Prostate gland (tissue), 2 donors: ENCODE measurements at regions of chr1 and their contacts with region 1.

Region 1: DNA sequence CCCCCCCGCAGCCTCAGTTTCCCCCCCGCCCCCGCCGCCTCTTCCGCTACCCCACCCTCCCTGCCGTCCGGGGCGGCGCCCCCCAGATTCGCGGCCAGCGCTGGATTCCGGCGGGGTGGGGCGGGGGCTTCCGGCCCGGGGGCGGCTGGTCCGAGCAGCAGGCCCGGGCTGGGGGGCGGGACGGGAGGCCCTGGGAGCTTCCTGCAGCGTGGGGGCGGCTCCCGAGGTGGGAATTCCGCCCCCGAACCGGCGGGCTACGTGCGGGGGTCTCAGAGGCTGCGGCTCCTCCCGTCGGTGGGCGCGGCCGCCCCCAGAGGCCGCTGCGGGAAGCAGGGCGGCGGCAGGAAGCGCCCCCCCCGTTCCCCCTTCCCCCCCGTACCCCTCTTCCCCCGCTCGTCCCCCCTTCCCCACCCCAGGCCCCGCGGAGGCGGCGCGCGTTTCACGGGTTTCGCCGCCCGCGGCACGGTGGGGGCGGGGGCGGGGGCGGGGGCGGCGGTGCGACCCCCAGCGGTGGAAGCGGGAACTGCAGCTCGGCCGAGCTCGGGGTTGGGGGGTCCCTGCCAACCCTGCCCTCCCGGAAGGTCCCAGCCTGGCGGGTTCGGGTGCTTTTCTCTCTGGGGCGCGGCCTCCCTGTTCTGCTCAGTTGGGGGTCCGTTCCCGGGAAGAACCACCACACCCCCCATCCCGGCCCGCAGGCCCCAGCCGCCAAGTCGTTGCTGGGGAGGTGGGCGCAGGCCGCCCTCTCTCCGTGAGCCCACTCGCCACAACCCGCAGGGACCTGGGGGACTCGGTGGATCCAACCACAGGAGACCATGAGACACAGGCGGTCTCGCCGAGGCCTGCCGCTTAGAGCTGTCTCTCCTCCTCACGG is 76.3 kb downstream of the MORN1 start:
- DNase-seq: no peak
- H3K4me3 ChIP-seq: peak overlapping the region; percentile 56 to 68
- H3K27ac ChIP-seq: peak overlapping the region; percentile 83 to 89
- H3K4me1 ChIP-seq: peaks cover 27% of the 10 kb centered on the region
- H3K27me3 ChIP-seq: no peaks in the 10 kb centered on the region
- CTCF ChIP-seq: peak; percentile 78 to 100 (median 90)
- POLR2A ChIP-seq: no peak

Region 2: DNA sequence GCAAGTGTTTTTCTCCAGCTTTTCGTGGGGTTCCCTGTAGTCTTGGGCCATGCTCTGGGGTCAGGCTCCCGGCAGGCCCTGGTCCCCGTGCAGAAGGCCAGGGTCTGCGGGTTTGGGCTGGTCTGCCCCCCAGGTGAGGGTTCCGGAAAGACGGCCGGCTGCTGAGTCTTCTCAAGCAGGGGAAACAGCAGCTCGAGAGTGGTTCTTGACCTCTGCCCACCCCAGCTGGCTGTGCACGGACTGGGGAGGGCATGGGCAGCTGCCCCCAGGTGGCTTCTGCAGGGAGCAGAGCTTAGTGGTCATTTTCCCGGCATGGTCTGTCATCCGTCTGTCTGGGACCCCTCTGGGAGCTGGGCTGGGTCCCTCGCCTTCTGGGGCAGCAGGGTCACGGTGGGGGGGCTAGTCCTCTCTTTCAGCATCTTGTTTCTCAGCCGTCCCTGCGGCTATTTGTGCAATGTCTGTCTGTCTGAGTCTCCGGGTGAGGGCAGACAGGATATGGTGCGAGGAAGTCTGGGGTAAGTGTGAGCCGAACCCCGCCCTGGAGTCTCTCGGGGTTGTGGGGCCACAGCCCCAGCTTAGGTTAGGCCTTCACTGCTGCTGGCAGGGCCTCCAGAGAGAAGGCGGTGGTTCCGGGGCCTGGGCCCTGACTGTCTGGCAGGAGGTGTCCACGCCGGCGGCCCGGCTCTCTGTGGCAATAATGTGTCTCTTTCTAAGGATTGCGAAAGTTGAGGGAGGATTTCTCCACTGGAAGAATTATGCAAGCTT is 80.9 kb before region 1 on chr1:
- intact Hi-C with region 1: loop called (anchors 5 kb)
- DNase-seq: peak; percentile 85
- H3K4me3 ChIP-seq: peak overlapping the region; percentile 11 to 13
- H3K27ac ChIP-seq: peak overlapping the region; percentile 93 to 95
- H3K4me1 ChIP-seq: peaks cover 49% of the 10 kb centered on the region
- H3K27me3 ChIP-seq: no peaks in the 10 kb centered on the region
- CTCF ChIP-seq: no peak
- POLR2A ChIP-seq: no peak

Region 3: GRCh38 chr1:2270260-2271100 is 44.6 kb before region 1 on chr1:
- intact Hi-C with region 1: loop called (anchors 5 kb)
- DNase-seq: no peak
- H3K4me3 ChIP-seq: no peak overlapping the region
- H3K27ac ChIP-seq: peak overlapping the region in 1 of 2 donors; percentile 18
- H3K4me1 ChIP-seq: peaks cover 24% of the 10 kb centered on the region
- H3K27me3 ChIP-seq: no peaks in the 10 kb centered on the region
- CTCF ChIP-seq: no peak
- POLR2A ChIP-seq: no peak

Region 4: GRCh38 chr1:2381741-2382620 is 66.9 kb after region 1 on chr1:
- intact Hi-C with region 1: loop called (anchors 5 kb)
- DNase-seq: peak; percentile 69
- H3K4me3 ChIP-seq: no peak overlapping the region
- H3K27ac ChIP-seq: no peak overlapping the region
- H3K4me1 ChIP-seq: no peaks in the 10 kb centered on the region
- H3K27me3 ChIP-seq: no peaks in the 10 kb centered on the region
- CTCF ChIP-seq: peak; percentile 92 to 98 (median 96)
- POLR2A ChIP-seq: no peak